SK-N-SH (cell line): ENCODE measurements at regions of chr11 and their contacts with region 1.

Region 1: DNA sequence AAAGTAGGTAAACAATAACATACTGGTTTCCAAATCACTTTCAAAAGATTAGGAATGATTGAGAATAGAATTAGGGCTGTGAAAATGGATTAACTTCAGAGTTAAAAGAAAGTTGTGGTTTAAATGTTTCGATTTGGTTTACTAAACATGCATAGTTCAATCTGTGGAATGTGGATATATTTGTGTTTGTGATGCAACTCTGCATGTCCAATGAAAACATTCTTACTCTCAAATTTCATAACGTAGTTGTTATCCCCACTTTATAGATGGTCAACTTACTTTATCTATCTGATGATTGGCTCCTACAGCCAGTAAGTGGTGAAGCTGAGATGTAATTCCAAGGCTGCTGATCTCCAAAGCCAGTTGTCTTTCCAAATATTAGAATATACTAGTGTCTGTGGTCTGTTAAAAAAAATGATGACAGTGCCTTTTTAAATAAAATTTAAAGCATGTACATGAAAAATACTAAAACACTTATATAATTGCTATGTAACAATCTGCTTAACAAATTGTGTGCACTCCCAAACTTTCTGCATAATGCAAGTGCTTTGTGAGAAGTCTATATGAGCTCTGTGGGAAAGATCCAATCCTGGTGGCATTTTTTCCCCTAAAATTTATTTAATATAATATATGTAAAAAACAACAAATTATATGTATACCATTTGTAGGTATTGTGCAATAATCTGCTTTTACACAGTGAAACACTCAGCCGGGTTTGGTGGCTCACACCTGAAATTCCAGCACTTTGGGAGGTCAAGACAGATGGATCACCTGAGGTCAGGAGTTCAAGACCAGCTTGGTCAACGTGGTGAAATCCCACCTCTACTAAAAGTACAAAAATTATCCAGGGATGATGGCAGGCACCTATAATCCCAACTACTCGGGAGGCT is 9.7 kb upstream of the SIK3 start:
- DNase-seq: no peak
- H3K4me3 ChIP-seq: no peak overlapping the region
- H3K27ac ChIP-seq: no peak overlapping the region
- H3K4me1 ChIP-seq: no peaks in the 10 kb centered on the region
- H3K27me3 ChIP-seq: no peaks in the 10 kb centered on the region
- CTCF ChIP-seq: no peak
- EP300 ChIP-seq: no peak
- RAD21 ChIP-seq: no peak

Region 2: GRCh38 chr11:116861539-116861938 is 246.4 kb before region 1 on chr11:
- CTCF ChIA-PET with region 1: interaction called, 32 read pairs
- POLR2A ChIA-PET with region 1: no interaction called
- DNase-seq: no peak
- H3K4me3 ChIP-seq: no peak overlapping the region
- H3K27ac ChIP-seq: peak overlapping the region; percentile 72 to 87
- H3K4me1 ChIP-seq: peaks cover 21 to 43% of the 10 kb centered on the region in 2 experiments
- H3K27me3 ChIP-seq: no peaks in the 10 kb centered on the region
- CTCF ChIP-seq: no peak
- EP300 ChIP-seq: no peak
- RAD21 ChIP-seq: no peak

Region 3: DNA sequence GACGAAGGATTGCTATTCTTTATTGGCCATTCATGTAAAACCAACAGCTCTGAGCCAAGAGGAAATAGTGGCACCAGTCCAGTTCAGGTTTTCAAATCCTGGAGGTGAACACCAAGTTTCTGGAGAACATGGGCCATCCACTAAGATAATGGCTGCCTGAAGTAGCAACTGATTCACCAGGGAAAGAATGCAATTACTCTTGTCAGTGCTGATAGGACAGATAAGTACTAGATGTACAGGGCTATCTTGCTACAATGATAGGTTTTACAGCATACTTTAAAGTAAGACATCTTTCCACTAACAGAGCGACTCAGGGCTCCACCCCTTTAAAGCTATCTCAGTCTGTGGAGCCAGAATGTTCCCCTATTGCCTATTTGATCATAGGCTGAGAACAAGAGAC is 233.7 kb before region 1 on chr11:
- CTCF ChIA-PET with region 1: interaction called, 79 read pairs
- POLR2A ChIA-PET with region 1: no interaction called
- DNase-seq: no peak
- H3K4me3 ChIP-seq: no peak overlapping the region; a peak in 1 of 4 replicates
- H3K27ac ChIP-seq: peak overlapping the region in 1 of 2 experiments; percentile 43; a peak in 1 of 4 replicates
- H3K4me1 ChIP-seq: peaks cover 3 to 7% of the 10 kb centered on the region in 2 experiments
- H3K27me3 ChIP-seq: no peaks in the 10 kb centered on the region
- CTCF ChIP-seq: no peak
- EP300 ChIP-seq: peak in 1 of 2 experiments; percentile 33; a peak in 1 of 4 replicates
- RAD21 ChIP-seq: no peak

Region 4: GRCh38 chr11:116879800-116880625 is 227.9 kb before region 1 on chr11:
- CTCF ChIA-PET with region 1: interaction called, 79 read pairs
- POLR2A ChIA-PET with region 1: no interaction called
- DNase-seq: peak; percentile 58
- H3K4me3 ChIP-seq: no peak overlapping the region; a peak in 1 of 4 replicates
- H3K27ac ChIP-seq: no peak overlapping the region; a peak in 1 of 4 replicates
- H3K4me1 ChIP-seq: no peaks in the 10 kb centered on the region; a peak in 2 of 4 replicates
- H3K27me3 ChIP-seq: no peaks in the 10 kb centered on the region
- CTCF ChIP-seq: peak; percentile 86
- EP300 ChIP-seq: no peak
- RAD21 ChIP-seq: peak; percentile 86

Region 5: DNA sequence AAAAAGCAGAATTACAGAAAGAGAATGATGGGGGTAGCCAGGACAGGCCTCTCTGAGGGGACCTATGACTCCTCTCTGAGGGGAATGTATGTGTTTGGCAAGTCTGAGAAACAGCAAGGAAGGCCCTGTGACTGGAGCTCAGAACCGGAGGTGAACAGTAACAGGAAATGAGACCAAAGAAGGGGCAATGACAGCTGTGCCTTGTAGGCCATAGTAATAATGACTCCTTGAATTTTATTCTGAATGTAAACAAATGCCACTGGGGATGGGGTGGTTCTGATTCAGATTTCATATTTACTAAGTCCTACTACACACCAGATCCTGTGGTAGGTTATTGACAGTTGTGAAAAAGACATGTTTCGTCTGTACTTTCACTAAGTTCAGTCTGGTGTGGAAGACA is 217.8 kb before region 1 on chr11:
- CTCF ChIA-PET with region 1: interaction called, 16 read pairs
- POLR2A ChIA-PET with region 1: interaction called, 3 read pairs
- DNase-seq: no peak
- H3K4me3 ChIP-seq: no peak overlapping the region
- H3K27ac ChIP-seq: no peak overlapping the region
- H3K4me1 ChIP-seq: peaks cover 0 to 7% of the 10 kb centered on the region in 2 experiments; a peak in 2 of 4 replicates
- H3K27me3 ChIP-seq: no peaks in the 10 kb centered on the region
- CTCF ChIP-seq: no peak
- EP300 ChIP-seq: no peak
- RAD21 ChIP-seq: no peak

Region 6: DNA sequence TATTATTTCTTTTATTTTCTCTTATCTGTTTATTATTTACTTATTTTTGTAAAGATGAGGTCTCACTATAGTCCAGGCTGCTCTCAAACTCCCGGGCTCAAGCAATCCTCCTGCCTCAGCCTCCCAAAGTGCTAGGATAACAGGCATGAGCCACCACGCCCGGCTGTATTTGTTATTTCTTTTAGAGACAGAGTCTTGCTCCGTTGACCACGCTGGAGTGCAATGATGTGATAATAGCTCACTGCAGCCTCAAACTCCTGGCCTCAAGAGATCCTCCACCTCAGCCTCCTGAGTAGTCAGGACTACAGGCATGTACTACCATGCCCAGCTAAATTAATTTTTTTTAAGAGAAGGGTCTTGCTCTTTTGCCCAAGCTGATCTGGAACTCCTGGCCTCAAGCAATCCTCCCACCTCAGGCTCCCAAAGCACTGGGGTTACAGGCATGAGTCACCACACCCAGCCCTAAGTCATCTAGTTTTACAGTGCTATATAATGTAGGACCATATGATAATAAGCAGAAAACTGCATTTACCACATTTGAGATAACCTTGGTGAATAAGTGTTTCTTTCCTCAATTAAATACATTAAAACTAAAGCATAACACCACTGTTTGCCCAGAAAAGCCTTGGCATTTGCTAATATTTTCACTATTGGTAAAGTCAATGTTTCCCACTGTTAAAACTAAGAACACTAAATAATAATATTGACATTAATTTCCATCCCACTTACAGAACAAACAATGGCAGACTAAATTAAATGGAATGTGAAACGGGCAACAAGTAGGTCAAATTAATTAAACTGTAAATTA is 137.3 kb before region 1 on chr11:
- CTCF ChIA-PET with region 1: no interaction called
- POLR2A ChIA-PET with region 1: no interaction called
- DNase-seq: no peak
- H3K4me3 ChIP-seq: no peak overlapping the region
- H3K27ac ChIP-seq: no peak overlapping the region
- H3K4me1 ChIP-seq: no peaks in the 10 kb centered on the region; a peak in 1 of 4 replicates
- H3K27me3 ChIP-seq: no peaks in the 10 kb centered on the region
- CTCF ChIP-seq: no peak
- EP300 ChIP-seq: no peak
- RAD21 ChIP-seq: no peak

Region 7: DNA sequence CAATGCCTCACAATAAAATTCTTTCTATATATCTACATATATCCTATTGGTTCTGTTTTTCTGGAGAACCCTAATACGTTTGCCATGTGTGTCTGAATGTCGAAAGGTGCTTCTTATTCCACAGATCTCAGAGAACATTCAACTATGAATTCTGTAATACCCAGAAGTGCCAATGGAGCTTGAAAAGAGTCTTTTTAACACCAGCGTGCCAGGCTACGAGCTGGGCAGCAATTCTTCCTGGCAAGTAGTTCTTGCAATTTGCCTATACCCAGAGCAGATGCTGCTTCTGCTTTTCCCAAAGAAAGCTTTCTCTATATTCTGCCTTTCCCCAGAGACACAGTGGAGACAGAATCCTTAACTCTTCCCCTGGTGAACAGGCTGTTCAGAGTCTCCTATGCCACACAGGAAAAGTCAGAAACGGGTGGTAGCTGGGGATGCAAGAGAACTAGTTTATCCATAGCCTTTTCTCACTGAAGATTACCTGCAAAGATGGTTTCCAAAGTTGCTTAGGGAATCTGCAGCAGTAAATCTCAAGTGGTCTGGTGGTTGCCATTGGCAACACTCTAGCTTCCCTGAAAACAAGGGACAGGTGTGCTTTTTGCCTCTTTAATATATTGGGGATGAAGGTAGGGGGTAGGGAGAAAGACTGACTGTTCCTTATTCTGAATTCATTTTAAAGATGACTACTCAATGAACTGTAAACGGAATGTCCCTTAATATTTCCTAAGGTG is 19.4 kb after region 1 on chr11:
- CTCF ChIA-PET with region 1: interaction called, 14 read pairs
- POLR2A ChIA-PET with region 1: no interaction called
- DNase-seq: no peak
- H3K4me3 ChIP-seq: no peak overlapping the region
- H3K27ac ChIP-seq: no peak overlapping the region
- H3K4me1 ChIP-seq: no peaks in the 10 kb centered on the region
- H3K27me3 ChIP-seq: no peaks in the 10 kb centered on the region; the same call in 1 of the 2 replicates
- CTCF ChIP-seq: no peak
- EP300 ChIP-seq: no peak
- RAD21 ChIP-seq: no peak

Region 8: GRCh38 chr11:117197516-117198456 is 89.8 kb after region 1 on chr11:
- CTCF ChIA-PET with region 1: no interaction called
- POLR2A ChIA-PET with region 1: no interaction called
- DNase-seq: peak; percentile 77
- H3K4me3 ChIP-seq: peak overlapping the region in 1 of 2 experiments; percentile 51; a peak in 1 of 4 replicates
- H3K27ac ChIP-seq: peak overlapping the region in 1 of 2 experiments; percentile 75; a peak in 3 of 4 replicates
- H3K4me1 ChIP-seq: peaks cover 9 to 13% of the 10 kb centered on the region in 2 experiments; a peak in 3 of 4 replicates
- H3K27me3 ChIP-seq: no peaks in the 10 kb centered on the region
- CTCF ChIP-seq: peak; percentile 49
- EP300 ChIP-seq: no peak
- RAD21 ChIP-seq: no peak

Region 9: DNA sequence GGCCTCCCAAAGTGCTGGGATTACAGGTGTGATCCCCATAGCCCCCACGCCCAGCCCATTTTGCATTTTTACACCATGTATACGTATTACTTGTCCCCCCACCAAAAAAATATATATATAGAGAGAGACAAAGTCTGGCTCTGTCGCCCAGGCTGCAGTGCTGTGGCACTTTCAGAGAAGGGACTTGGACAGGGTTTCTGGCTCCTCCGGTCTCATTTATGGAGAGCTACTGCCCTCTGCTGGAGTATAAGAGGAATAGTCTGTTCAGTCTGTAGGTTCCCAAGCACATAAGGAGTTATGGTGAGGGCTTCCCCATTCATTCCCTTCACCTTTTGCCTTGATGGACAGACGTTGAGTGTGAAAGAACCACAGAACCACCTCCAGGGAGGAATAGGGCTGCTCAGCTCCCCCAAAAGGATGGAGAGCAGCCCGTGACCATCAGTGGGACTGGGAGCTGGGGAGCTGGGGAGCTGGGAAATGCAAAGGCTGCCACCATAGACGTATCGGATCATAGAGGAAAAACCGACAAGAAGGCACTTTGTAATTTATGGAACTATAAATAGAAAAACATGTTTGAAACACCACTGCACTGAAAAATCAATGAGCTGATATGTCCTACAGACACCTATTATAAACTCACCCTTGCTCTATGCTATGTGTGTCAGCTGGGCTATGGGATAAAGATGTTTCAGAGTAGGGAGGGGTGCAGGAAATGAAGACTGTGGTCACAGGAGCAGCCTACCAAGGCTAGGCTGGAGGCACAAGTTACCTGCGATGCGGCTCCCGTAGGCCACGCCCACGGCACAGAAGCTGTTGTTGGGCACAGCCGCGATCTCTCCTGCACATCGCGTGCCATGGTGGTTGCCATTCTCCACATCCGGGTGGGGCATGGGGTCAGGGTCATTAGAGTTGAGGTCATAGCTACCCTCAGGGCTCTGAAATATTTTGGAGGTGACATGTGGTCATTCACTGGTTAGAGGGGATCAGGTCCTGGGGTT is 118.7 kb after region 1 on chr11:
- CTCF ChIA-PET with region 1: interaction called, 22 read pairs
- POLR2A ChIA-PET with region 1: no interaction called
- DNase-seq: peak; percentile 84
- H3K4me3 ChIP-seq: no peak overlapping the region; a peak in 1 of 4 replicates
- H3K27ac ChIP-seq: no peak overlapping the region
- H3K4me1 ChIP-seq: peaks cover 14 to 16% of the 10 kb centered on the region in 2 experiments; a peak in 3 of 4 replicates
- H3K27me3 ChIP-seq: no peaks in the 10 kb centered on the region
- CTCF ChIP-seq: peak; percentile 79
- EP300 ChIP-seq: no peak
- RAD21 ChIP-seq: peak; percentile 90